GM18951 (cell line): ENCODE measurements at regions of chr1 and their contacts with region 1.

Region 1: DNA sequence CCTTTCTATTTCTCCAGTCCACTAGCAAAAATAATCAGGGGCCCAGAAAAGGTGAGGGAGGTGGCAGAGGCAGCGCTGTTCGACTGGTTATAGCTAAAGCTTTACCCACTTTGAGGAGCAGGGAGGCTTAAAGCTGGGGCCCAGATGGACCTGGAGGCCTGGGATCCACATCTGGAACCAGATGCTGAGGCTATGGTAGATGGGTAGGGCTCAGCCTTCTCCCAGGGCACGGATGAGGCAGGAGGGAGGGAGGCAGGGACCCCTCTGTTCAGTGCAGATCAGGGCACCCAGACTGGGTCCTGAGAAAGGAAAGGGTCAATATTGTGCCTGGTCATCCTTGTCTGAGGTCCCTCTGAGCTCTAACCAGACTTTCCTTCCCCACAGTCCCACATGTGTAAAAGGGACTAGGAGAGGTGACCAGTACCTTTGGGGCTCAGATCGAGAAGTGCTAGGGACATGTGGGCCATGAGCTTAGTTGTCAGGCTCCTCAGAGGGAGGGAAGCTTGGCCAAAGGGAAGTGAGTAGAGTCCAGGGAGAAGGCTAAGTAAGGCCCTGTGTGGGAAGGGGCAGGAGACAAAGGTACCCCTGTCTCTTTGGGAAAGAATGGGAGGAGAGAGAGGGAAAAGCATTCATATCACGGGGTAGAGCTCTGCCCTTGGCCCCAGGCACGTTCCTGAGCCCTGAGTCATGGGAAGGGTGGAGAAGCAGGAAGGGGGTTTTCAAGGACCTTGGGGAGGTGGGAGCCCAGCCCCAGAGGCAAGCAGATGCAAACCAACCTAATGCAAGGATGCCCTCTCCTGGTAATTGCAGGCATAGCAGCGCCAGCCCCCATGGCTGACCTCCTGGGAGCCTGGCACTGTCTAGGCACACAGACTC is 15.4 kb downstream of the LMNA start:
- POLR2A ChIP-seq: no peak

Region 2: GRCh38 chr1:155185351-155186066 is 944.4 kb before region 1 on chr1:
- in situ Hi-C with region 1: no loop called
- POLR2A ChIP-seq: peak; percentile 33

Region 3: GRCh38 chr1:156050416-156050815 is 79.5 kb before region 1 on chr1:
- in situ Hi-C with region 1: no loop called
- POLR2A ChIP-seq: no peak

Region 4: DNA sequence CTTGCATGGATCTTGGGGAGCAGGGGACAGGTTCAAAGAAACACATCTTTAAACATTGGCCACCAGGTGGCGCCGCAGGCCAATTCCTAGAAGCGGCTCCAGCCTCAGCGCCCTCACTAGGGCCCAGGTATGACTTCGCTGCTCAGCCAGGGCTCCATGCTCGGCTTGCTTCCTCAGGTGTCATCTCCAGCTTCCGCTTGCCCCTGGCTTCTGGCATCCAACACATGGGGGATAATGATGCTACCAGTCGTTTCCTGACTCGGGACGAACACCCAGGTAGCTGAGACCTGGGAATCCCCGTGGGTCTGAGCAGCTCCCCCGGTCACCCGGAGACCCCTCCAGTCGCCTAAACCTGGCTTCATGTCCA is 39.1 kb before region 1 on chr1:
- in situ Hi-C with region 1: loop called (anchors 5 kb)
- POLR2A ChIP-seq: no peak

Region 5: DNA sequence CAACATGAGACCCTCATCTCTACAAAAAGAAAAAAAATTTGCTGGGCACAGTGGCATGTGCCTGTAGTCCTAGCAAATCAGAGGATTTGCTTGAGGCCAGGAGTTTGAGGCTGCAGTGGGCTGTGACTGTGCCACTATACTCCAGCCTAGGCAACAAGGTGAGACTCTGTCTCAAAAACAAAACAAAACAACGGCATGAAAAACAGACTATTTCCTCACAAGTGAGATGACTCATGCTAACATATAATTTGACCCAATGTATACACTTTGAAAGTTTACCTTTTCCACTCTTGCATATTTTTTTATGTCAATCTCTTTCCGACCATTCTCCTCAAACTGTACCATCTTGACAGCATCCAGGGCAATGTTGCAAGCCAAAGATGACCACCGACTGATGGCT is 190.6 kb after region 1 on chr1:
- in situ Hi-C with region 1: no loop called
- POLR2A ChIP-seq: no peak

Region 6: DNA sequence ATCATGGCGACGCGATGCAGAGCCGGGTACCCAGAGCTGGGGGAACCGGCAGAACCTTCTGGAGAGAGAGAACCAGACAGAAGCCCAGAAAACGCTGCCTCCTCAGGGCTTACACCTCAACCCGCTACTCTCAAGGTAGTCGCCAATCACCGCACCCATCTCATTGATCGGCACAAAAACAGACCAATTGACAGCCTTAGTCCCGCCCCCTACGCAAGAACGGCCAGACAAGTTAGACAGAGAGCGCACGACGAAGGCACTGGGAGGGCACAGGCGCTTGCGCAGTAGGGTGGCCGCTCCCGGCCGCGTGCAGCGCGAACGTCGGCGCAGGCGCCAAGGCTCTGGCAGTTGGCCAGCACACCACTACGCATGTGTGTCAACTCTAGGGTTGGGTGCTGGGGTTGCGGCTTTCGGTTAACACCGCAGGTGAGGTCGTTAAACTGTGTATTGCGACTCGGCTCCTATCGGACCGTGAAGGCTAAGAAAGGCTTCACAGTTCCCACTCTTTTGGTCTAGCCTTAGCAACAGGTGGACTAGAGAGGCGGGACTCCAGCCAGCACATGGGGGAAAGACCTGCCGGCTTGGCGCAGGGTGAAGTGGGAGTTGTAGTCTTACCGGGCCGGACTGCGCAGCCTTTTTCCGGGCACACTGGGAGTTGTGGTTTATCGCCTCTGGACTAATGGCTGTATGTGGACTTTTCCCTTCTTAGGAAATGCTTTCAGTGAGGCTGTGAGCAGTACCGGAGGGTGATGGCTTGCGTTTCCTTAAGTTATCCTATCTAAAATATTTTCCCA is 208.4 kb after region 1 on chr1 and contains the starts of genes CCT3 and TSACC:
- in situ Hi-C with region 1: loop called (anchors 10 kb)
- POLR2A ChIP-seq: peak; percentile 87